ENCODE measurements at regions of chr10 and their contacts with region 1.

Region 1: GRCh38 chr10:72337020-72337629 is 17.6 kb downstream of the DNAJB12 start:
- H3K4me3 Mint-ChIP-seq: no peak overlapping the region
- H3K27ac Mint-ChIP-seq: no peak overlapping the region
- H3K4me1 Mint-ChIP-seq: peaks cover 70% of the 10 kb centered on the region
- H3K27me3 Mint-ChIP-seq: no peaks in the 10 kb centered on the region

Region 2: DNA sequence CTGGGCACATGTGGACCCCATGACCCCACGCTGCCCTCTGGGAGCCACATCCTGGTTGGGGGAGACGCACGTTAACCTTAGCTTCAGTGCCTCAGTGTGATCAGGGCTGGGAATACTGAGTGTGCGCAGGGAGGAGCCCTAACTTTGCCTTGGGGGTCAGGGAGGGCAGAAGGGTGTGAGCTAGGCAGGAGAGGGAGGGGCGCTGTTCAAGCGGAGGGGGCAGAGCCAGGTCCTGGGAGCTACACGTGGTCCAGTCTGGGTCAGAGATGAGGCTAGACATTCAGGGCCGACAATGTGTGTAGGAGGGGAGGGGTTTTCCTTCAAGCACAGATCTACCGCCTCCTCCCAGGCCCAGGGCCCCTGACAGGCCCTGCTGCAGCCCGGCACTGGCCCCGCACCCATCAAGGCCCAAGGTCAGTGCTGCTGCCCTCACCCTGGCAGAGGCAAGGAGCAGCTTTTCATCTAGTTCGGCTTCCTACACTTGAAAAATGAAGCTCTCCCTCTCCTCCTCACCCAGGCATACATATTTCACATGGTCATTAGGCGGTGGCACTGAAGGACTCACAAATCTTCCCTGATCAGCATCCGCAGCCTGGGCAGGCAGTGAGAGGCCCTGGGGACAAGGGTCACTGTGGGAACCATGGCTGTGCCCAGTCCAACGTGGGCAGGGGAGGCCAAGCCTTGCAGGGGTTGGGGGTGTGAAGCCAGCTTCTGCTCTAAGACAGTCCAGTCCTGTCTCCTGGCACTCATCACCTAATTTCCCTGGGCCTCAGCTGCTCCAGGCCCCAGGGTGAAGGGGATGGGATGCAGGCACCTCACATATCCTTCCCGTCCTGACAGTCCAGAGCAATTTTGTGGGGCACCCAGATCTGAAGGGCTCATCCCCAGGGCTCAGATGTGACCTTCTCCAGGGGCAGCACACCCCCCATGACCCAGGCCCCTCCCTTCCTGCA is 664.9 kb before region 1 on chr10:
- intact Hi-C with region 1: no loop called
- H3K4me3 Mint-ChIP-seq: no peak overlapping the region
- H3K27ac Mint-ChIP-seq: peak overlapping the region; percentile 51
- H3K4me1 Mint-ChIP-seq: peaks cover 28% of the 10 kb centered on the region
- H3K27me3 Mint-ChIP-seq: peaks cover 10% of the 10 kb centered on the region

Region 3: GRCh38 chr10:72126184-72126871 is 210.8 kb before region 1 on chr10:
- intact Hi-C with region 1: loop called (anchors 2 kb)
- H3K4me3 Mint-ChIP-seq: no peak overlapping the region
- H3K27ac Mint-ChIP-seq: no peak overlapping the region
- H3K4me1 Mint-ChIP-seq: peaks cover 14% of the 10 kb centered on the region
- H3K27me3 Mint-ChIP-seq: peaks cover 11% of the 10 kb centered on the region

Region 4: GRCh38 chr10:72490951-72491350 is 153.8 kb after region 1 on chr10:
- intact Hi-C with region 1: no loop called
- H3K4me3 Mint-ChIP-seq: no peak overlapping the region
- H3K27ac Mint-ChIP-seq: no peak overlapping the region
- H3K4me1 Mint-ChIP-seq: peaks cover 26% of the 10 kb centered on the region
- H3K27me3 Mint-ChIP-seq: no peaks in the 10 kb centered on the region

Region 5: DNA sequence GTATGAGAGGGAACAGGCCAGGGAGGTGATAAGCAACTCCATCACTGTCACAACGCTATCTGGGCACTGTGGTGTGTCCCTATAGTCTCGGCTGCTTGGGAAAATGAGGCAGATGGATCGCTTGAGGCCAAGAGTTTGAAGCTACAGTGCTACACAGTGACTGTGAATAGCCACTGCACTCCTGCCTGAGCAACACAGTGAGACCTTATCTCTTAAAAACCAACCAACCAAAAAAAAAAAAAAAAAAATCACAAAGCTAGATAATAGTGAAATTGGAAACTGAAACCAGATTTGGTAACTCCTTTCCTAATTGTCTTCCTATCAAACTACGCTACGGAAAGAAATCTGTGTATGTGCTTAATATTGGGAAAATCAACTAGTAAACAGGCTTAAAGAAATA is 274.7 kb after region 1 on chr10:
- intact Hi-C with region 1: no loop called
- H3K4me3 Mint-ChIP-seq: peak overlapping the region; percentile 37
- H3K27ac Mint-ChIP-seq: peak overlapping the region; percentile 34
- H3K4me1 Mint-ChIP-seq: peaks cover 40% of the 10 kb centered on the region
- H3K27me3 Mint-ChIP-seq: no peaks in the 10 kb centered on the region

Region 6: DNA sequence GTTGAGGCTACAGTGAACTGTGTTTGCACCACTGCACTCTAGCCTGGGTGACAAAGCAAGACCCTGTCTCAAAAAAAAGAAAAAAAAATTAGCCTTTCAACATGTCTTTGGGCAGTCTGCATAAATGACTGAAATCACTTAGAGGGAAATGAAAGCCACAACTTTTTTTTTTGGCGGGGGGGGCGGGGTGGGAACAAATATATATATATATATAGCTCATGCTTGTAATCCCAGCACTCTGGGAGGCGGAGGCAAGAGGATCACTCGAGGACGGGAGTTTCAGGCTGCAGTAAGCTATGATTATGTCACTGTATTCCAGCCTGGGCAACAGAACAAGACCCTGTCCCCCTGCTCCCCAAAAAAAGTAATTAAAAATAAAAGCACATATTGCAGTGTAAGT is 312.2 kb after region 1 on chr10:
- intact Hi-C with region 1: no loop called
- H3K4me3 Mint-ChIP-seq: no peak overlapping the region
- H3K27ac Mint-ChIP-seq: no peak overlapping the region
- H3K4me1 Mint-ChIP-seq: peaks cover 7% of the 10 kb centered on the region
- H3K27me3 Mint-ChIP-seq: peaks cover 12% of the 10 kb centered on the region

Measured in dendritic cell treated with granulocyte-macrophage colony-stimulating factor and Interleukin-4, amounts not matched to agents 40 ng/mL and 50 ng/mL, for 4 days (primary cell).